ENCODE measurements at regions of chr7 and their contacts with region 1.

Region 1: GRCh38 chr7:120554960-120555571 is 282.1 kb downstream of the KCND2 start:
- DNase-seq: no peak
- H3K4me3 ChIP-seq: no peak overlapping the region
- CTCF ChIP-seq: peak; percentile 52

Region 2: DNA sequence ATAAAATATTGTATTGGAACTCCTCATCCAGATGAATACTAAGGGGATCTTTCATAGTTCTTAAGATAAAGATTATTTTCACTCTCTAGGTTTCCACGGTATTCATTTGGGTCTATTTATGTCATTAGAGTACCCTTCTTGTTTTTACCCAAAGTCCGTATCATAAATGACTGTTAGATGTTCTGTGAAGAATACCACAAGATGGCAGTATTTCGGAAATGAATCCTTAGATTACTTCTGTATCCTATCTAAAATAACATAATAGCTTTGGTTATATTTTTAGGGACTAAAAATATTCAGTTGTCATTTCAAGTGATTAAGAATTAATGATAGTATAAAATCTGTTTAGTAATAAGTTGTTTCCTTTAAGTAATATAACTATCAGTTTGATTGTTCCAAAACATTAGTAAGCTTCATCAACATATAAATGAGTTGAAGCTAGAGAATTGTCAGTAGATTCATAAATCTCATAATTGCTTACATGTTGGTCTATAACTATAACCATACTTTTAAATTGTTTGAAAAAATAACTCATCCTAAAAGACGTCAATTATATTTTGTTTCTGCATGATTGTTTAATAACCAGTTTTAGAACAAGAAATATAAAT is 619.5 kb before region 1 on chr7:
- CTCF ChIA-PET with region 1: interaction called, 18 read pairs
- POLR2A ChIA-PET with region 1: no interaction called
- DNase-seq: no peak
- H3K4me3 ChIP-seq: no peak overlapping the region
- CTCF ChIP-seq: peak; percentile 36

Region 3: DNA sequence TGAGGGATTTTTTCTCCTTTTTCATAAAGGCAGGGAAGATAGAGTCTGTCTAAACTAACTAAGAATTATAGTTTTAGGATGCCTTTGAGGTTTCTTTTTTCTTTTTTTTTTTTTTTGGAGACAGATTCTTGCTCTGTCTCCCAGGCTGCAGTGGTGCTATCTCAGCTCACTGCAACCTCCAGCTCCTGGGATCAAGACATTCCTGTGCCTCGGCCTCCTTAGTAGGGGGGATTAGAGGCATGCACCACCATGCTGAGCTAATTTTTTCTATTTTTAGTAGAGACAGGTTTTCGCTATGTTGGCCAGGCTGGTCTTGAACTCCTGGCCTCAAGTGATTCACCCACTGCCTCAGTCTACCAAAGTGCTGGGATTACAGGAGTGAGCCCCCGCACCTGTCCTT is 42.4 kb before region 1 on chr7:
- CTCF ChIA-PET with region 1: no interaction called
- POLR2A ChIA-PET with region 1: no interaction called
- DNase-seq: no peak
- H3K4me3 ChIP-seq: no peak overlapping the region
- CTCF ChIP-seq: no peak

Region 4: DNA sequence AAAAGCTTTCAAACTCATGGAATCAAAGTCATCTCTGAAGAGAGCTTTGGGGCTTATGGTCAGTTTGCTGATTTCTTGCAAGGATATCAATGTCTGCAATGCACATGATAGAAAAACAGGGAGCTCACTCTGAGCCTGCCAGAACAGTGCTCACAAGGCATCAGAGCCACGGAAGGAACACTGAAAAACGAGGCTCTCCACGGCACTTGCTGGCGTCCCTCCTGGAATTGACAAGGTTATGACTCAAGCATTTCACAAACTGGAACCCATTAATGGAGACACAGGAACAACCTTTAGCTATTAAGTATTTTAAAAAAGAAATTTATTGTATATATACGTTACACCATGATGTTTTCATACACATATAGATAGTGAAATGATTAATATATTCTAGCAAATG is 15.7 kb before region 1 on chr7:
- CTCF ChIA-PET with region 1: interaction called, 11 read pairs
- POLR2A ChIA-PET with region 1: no interaction called
- DNase-seq: no peak
- H3K4me3 ChIP-seq: no peak overlapping the region
- CTCF ChIP-seq: no peak

Measured in AG04449 (cell line).